ENCODE measurements at regions of chr11 and their contacts with region 1.

Region 1: GRCh38 chr11:122754553-122755322 is 83.6 kb upstream of the CRTAM start:
- DNase-seq: peak; percentile 42
- H3K4me3 Mint-ChIP-seq: no peak overlapping the region
- H3K27ac Mint-ChIP-seq: no peak overlapping the region
- H3K4me1 Mint-ChIP-seq: peaks cover 51% of the 10 kb centered on the region
- H3K27me3 Mint-ChIP-seq: no peaks in the 10 kb centered on the region

Region 2: DNA sequence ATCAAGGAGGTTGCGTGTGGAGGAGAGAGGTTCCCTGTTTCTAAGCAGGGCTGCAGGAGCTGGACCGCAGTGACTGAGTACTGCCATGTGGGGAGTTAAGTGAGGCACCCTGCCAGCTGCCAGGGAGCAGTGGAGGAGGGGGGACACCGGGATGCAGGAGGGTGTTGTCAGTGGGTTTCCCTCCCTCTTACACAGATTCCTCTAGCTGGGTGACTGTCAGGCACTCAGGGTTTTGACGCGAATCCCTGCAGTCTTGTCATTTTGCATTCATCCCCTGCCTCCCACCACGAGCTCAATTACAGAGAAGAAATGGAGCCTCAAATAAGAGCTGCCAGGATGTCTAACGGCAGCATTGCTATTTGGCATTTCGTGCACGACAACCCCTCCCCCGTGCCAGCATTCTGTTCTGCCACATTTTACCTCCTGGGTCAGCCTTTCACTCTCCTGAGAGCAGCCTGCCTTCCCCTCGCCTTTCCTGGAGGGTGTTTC is 1182.1 kb before region 1 on chr11:
- CTCF ChIA-PET with region 1: no interaction called
- POLR2A ChIA-PET with region 1: no interaction called
- intact Hi-C with region 1: no loop called
- DNase-seq: no peak
- H3K4me3 Mint-ChIP-seq: no peak overlapping the region
- H3K27ac Mint-ChIP-seq: peak overlapping the region; percentile 4
- H3K4me1 Mint-ChIP-seq: peaks cover 14% of the 10 kb centered on the region
- H3K27me3 Mint-ChIP-seq: no peaks in the 10 kb centered on the region

Region 3: GRCh38 chr11:122628810-122629555 is 125.8 kb before region 1 on chr11:
- CTCF ChIA-PET with region 1: interaction called, 64 read pairs
- POLR2A ChIA-PET with region 1: no interaction called
- intact Hi-C with region 1: loop called (anchors 1 kb)
- DNase-seq: peak; percentile 79
- H3K4me3 Mint-ChIP-seq: no peak overlapping the region
- H3K27ac Mint-ChIP-seq: no peak overlapping the region
- H3K4me1 Mint-ChIP-seq: peaks cover 6% of the 10 kb centered on the region
- H3K27me3 Mint-ChIP-seq: peaks cover 1% of the 10 kb centered on the region

Region 4: DNA sequence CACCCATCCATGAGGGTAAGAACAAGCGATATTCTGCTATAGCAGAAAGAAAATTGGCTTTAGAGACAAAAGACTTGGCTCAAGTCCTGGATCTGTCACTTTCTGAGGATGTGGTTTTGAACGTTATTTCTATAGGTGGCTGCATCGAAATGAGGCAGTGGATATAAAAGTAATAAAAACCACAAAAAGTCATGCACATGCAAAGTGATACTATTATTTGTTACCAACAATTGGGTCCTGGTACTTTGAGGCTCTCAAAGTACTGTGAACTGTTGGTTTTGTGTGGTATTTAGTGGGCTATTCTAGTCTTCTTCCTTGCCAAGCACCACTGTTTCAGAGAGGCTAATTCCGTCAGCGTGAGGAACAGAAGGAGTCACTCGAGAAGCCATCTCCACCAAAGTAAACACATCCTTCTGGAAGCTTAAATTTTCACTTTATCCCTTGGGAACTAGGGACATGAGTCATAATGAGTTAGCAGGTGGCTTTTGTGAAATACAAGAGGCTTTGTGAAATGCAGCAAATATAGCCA is 86.1 kb before region 1 on chr11:
- CTCF ChIA-PET with region 1: interaction called, 16 read pairs
- POLR2A ChIA-PET with region 1: no interaction called
- intact Hi-C with region 1: no loop called
- DNase-seq: peak; percentile 22
- H3K4me3 Mint-ChIP-seq: no peak overlapping the region
- H3K27ac Mint-ChIP-seq: peak overlapping the region; percentile 29
- H3K4me1 Mint-ChIP-seq: peaks cover 52% of the 10 kb centered on the region
- H3K27me3 Mint-ChIP-seq: no peaks in the 10 kb centered on the region

Region 5: DNA sequence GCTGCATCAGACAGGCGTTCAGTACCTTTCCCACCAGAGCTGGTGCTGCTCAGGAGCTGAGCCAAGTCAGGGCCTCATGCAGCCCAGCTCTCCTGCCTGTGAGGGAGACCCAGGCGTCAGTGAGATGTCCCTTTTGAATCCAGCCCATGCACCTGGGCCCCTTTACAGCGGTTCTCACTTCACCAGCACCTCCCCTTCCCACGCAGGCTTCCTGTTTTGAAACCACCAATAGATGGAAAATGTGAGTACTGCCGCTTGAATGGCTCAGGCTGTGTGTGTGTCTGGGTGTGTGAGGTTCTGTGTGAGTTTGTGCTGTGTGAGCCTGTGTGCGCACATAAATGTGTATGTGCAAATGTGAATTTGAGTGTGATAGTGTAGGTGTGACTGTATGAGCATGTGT is 10.8 kb before region 1 on chr11:
- CTCF ChIA-PET with region 1: interaction called, 31 read pairs
- POLR2A ChIA-PET with region 1: interaction called, 3 read pairs
- intact Hi-C with region 1: no loop called
- DNase-seq: peak; percentile 91
- H3K4me3 Mint-ChIP-seq: no peak overlapping the region
- H3K27ac Mint-ChIP-seq: no peak overlapping the region
- H3K4me1 Mint-ChIP-seq: peaks cover 14% of the 10 kb centered on the region
- H3K27me3 Mint-ChIP-seq: no peaks in the 10 kb centered on the region

Region 6: GRCh38 chr11:122781378-122782195 is 26.8 kb after region 1 on chr11:
- CTCF ChIA-PET with region 1: interaction called, 23 read pairs
- POLR2A ChIA-PET with region 1: no interaction called
- intact Hi-C with region 1: loop called (anchors 2 kb)
- DNase-seq: peak; percentile 84
- H3K4me3 Mint-ChIP-seq: no peak overlapping the region
- H3K27ac Mint-ChIP-seq: no peak overlapping the region
- H3K4me1 Mint-ChIP-seq: peaks cover 23% of the 10 kb centered on the region
- H3K27me3 Mint-ChIP-seq: no peaks in the 10 kb centered on the region